ENCODE measurements at regions of chr11 and their contacts with region 1.

Region 1: GRCh38 chr11:1917671-1918516 is 1.6 kb upstream of the TNNT3 start:
- DNase-seq: no peak
- H3K4me3 Mint-ChIP-seq: no peak overlapping the region
- H3K27ac Mint-ChIP-seq: no peak overlapping the region
- H3K4me1 Mint-ChIP-seq: peaks cover 14% of the 10 kb centered on the region
- H3K27me3 Mint-ChIP-seq: peaks cover 3% of the 10 kb centered on the region

Region 2: GRCh38 chr11:1882519-1883238 is 35.2 kb before region 1 on chr11:
- CTCF ChIA-PET with region 1: interaction called, 11 read pairs
- POLR2A ChIA-PET with region 1: interaction called, 39 read pairs
- DNase-seq: peak; percentile 75
- H3K4me3 Mint-ChIP-seq: no peak overlapping the region
- H3K27ac Mint-ChIP-seq: no peak overlapping the region
- H3K4me1 Mint-ChIP-seq: peaks cover 12% of the 10 kb centered on the region
- H3K27me3 Mint-ChIP-seq: no peaks in the 10 kb centered on the region

Region 3: DNA sequence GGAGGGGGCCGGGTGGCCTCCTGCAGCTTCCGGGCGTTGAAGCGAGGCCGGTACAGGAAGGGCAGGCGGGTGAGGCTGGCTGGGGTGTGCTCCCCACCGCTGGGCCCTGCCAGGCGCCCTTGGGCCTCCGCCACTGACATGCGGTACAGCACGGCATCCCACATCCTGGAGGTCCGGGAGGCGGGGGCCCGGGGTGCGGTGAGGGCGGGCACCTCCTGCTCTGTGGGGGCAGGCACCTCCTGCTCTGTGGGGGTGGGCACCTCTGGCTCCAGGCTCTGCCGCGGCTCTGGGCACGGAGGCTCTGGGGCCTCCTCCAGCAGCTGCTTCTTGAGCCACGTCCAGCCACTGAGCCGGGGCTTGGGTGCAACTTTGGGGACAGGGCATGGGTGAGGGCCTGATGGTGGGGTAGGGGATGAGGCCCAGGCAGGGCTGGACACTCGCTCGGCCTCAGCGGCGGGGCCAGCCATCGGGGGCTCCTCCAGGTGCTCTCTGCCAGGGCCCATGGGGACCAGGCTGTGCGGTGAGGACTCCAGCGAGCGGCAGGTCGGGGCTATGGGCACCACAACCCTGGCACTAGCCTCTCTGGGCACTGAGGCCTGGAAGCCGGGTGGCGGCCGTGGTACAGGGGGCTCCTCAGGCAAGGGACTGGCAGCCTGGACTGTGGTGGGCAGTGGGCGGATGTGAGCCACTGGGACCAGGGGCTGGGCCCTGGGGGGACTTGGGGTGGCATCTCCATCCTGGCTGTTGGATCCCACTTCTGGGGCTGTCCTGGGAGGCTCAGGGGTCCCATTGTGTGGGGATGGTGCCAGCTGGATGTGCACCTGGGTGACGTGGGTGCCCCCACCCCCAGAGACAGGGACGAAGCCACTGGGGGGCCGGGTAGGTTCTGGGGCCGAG is 28.4 kb before region 1 on chr11:
- CTCF ChIA-PET with region 1: interaction called, 4 read pairs
- POLR2A ChIA-PET with region 1: interaction called, 39 read pairs
- DNase-seq: peak; percentile 91
- H3K4me3 Mint-ChIP-seq: peak overlapping the region; percentile 55
- H3K27ac Mint-ChIP-seq: peak overlapping the region; percentile 94
- H3K4me1 Mint-ChIP-seq: peaks cover 43% of the 10 kb centered on the region
- H3K27me3 Mint-ChIP-seq: no peaks in the 10 kb centered on the region